ENCODE measurements at regions of chr4 and their contacts with region 1.

Region 1: GRCh38 chr4:108072300-108072699 is 82.6 kb downstream of the HADH start:
- DNase-seq: peak in 7 of 9 donors; percentile 63 to 94 (median 80)
- ATAC-seq: peak; percentile 92
- H3K4me3 ChIP-seq: peak overlapping the region; percentile 0
- H3K4me3 Mint-ChIP-seq: peak overlapping the region; percentile 53 to 81 (median 74)
- H3K27ac ChIP-seq: peak overlapping the region; percentile 77
- H3K27ac Mint-ChIP-seq: peak overlapping the region; percentile 84 to 98 (median 94)
- H3K4me1 ChIP-seq: peaks cover 23 to 62% of the 10 kb centered on the region in 2 donors
- H3K4me1 Mint-ChIP-seq: peaks cover 32 to 95% (median 81%) of the 10 kb centered on the region in 7 donors
- H3K27me3 ChIP-seq: no peaks in the 10 kb centered on the region
- H3K27me3 Mint-ChIP-seq: no peaks in the 10 kb centered on the region

Region 2: GRCh38 chr4:107930821-107931774 is 141.2 kb before region 1 on chr4 and contains the start of gene CYP2U1:
- CTCF ChIA-PET with region 1: no interaction called
- POLR2A ChIA-PET with region 1: no interaction called
- intact Hi-C with region 1: no loop called
- DNase-seq: peak; percentile 74 to 84 (median 81)
- ATAC-seq: peak; percentile 96
- H3K4me3 ChIP-seq: peak within 1 kb of the TSS; percentile 86
- H3K4me3 Mint-ChIP-seq: peak within 1 kb of the TSS; percentile 90 to 98 (median 92)
- H3K27ac ChIP-seq: peak within 1 kb of the TSS; percentile 71
- H3K27ac Mint-ChIP-seq: peak within 1 kb of the TSS; percentile 65 to 98 (median 88)
- H3K4me1 ChIP-seq: peaks cover 8 to 12% of the 10 kb centered on the region in 2 donors
- H3K4me1 Mint-ChIP-seq: peaks cover 21 to 50% (median 35%) of the 10 kb centered on the region in 7 donors
- H3K27me3 ChIP-seq: no peaks in the 10 kb centered on the region
- H3K27me3 Mint-ChIP-seq: peaks cover 0 to 17% (median 0%) of the 10 kb centered on the region in 5 donors
- total RNA-seq, gene CYP2U1: 3.8 to 11.4 (median 5.8) TPM

Region 3: DNA sequence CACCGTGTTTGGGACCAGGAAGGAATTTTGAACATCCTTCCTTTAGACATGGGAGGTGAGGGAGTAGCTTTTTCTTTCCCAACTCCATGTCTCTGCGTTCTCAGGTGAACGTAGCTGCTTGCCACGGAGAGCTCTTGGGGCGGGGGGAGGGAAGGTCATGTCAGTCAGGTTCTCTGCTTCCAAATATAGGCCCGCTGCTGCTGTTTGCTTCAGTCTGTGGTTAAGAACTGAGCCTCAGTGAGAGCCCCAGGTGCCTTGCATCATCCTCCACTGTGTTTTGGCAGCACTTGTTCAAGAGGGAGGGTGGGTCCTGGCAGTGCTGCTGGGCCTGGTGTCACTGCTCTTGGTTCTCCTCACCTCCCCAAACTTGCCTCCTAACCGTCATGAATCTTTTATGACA is 36.1 kb before region 1 on chr4:
- CTCF ChIA-PET with region 1: no interaction called
- POLR2A ChIA-PET with region 1: interaction called, 8 read pairs
- intact Hi-C with region 1: loop called (anchors 1 to 2 kb)
- DNase-seq: peak in 8 of 9 donors; percentile 43 to 93 (median 88)
- ATAC-seq: peak; percentile 99
- H3K4me3 ChIP-seq: peak overlapping the region; percentile 41
- H3K4me3 Mint-ChIP-seq: peak overlapping the region; percentile 73 to 87 (median 80)
- H3K27ac ChIP-seq: peak overlapping the region; percentile 78
- H3K27ac Mint-ChIP-seq: peak overlapping the region; percentile 90 to 100 (median 96)
- H3K4me1 ChIP-seq: peaks cover 0 to 55% of the 10 kb centered on the region in 2 donors
- H3K4me1 Mint-ChIP-seq: peaks cover 19 to 81% (median 66%) of the 10 kb centered on the region in 7 donors
- H3K27me3 ChIP-seq: no peaks in the 10 kb centered on the region
- H3K27me3 Mint-ChIP-seq: no peaks in the 10 kb centered on the region

Region 4: DNA sequence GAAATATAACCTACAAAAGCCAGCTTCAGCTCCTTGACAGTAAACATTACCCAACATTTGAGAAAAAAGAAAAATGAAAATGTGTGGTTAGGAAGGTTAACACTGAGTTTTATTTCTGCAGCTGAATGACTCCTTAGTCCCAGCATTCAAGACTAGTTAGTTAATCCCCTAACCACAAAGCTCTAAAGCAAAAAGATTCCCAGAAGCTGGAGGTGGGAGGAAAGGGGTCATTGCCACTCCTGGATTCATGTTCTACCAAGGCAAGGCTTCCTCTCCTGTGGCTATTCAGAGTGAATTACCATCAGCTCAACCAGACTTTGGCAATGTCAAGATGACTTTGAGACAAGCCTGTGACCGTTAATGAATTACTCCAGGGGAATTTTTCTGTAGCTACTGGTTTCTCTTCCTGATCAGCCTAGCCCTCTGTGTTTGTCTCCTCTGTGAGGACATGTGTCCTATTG is 19.0 kb before region 1 on chr4:
- CTCF ChIA-PET with region 1: no interaction called
- POLR2A ChIA-PET with region 1: interaction called, 55 read pairs
- intact Hi-C with region 1: loop called (anchors 2 kb)
- DNase-seq: no peak
- ATAC-seq: no peak
- H3K4me3 ChIP-seq: no peak overlapping the region
- H3K4me3 Mint-ChIP-seq: peak overlapping the region; percentile 36 to 84 (median 54)
- H3K27ac ChIP-seq: peak overlapping the region; percentile 66
- H3K27ac Mint-ChIP-seq: peak overlapping the region; percentile 82 to 99 (median 93)
- H3K4me1 ChIP-seq: peaks cover 15 to 82% of the 10 kb centered on the region in 2 donors
- H3K4me1 Mint-ChIP-seq: peaks cover 56 to 100% (median 94%) of the 10 kb centered on the region in 7 donors
- H3K27me3 ChIP-seq: no peaks in the 10 kb centered on the region
- H3K27me3 Mint-ChIP-seq: no peaks in the 10 kb centered on the region

Region 5: DNA sequence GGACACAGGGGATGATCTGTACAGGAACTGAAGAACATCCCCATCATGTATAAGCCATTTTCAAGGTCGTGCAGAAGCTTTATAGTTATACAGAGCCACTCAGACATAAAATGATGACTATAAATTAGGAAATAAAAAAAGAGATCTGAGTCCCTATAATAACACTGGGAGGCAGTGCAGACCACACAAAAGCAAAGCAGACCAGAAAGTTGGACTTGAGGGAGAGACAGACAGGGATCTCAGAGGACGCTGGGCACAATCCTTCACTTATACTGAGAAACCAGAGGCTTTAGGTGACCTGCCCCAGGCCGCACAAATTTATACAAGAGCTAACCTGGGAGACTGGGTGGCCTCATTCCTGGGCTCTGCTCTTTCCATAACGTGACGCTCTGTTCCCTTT is 12.1 kb before region 1 on chr4:
- CTCF ChIA-PET with region 1: interaction called, 3 read pairs
- POLR2A ChIA-PET with region 1: interaction called, 55 read pairs
- intact Hi-C with region 1: loop called (anchors 1 to 2 kb)
- DNase-seq: peak in 1 of 9 donors; percentile 17
- ATAC-seq: no peak
- H3K4me3 ChIP-seq: no peak overlapping the region
- H3K4me3 Mint-ChIP-seq: peak overlapping the region in 5 of 10 donors; percentile 13 to 84 (median 64)
- H3K27ac ChIP-seq: peak overlapping the region; percentile 66
- H3K27ac Mint-ChIP-seq: peak overlapping the region in 8 of 9 donors; percentile 78 to 99 (median 90)
- H3K4me1 ChIP-seq: peaks cover 0 to 87% of the 10 kb centered on the region in 2 donors
- H3K4me1 Mint-ChIP-seq: peaks cover 33 to 99% (median 92%) of the 10 kb centered on the region in 7 donors
- H3K27me3 ChIP-seq: no peaks in the 10 kb centered on the region
- H3K27me3 Mint-ChIP-seq: no peaks in the 10 kb centered on the region

Region 6: GRCh38 chr4:108087293-108087967 is 15.1 kb after region 1 on chr4:
- CTCF ChIA-PET with region 1: interaction called, 3 read pairs
- POLR2A ChIA-PET with region 1: interaction called, 6 read pairs
- intact Hi-C with region 1: loop called in 1 of 2 experiments (anchors 2 kb)
- DNase-seq: no peak
- ATAC-seq: no peak
- H3K4me3 ChIP-seq: no peak overlapping the region
- H3K4me3 Mint-ChIP-seq: peak overlapping the region in 8 of 10 donors; percentile 14 to 69 (median 31)
- H3K27ac ChIP-seq: peak overlapping the region; percentile 54
- H3K27ac Mint-ChIP-seq: peak overlapping the region; percentile 10 to 97 (median 87)
- H3K4me1 ChIP-seq: peaks cover 0 to 69% of the 10 kb centered on the region in 2 donors
- H3K4me1 Mint-ChIP-seq: peaks cover 26 to 96% (median 84%) of the 10 kb centered on the region in 7 donors
- H3K27me3 ChIP-seq: no peaks in the 10 kb centered on the region
- H3K27me3 Mint-ChIP-seq: no peaks in the 10 kb centered on the region

Region 7: DNA sequence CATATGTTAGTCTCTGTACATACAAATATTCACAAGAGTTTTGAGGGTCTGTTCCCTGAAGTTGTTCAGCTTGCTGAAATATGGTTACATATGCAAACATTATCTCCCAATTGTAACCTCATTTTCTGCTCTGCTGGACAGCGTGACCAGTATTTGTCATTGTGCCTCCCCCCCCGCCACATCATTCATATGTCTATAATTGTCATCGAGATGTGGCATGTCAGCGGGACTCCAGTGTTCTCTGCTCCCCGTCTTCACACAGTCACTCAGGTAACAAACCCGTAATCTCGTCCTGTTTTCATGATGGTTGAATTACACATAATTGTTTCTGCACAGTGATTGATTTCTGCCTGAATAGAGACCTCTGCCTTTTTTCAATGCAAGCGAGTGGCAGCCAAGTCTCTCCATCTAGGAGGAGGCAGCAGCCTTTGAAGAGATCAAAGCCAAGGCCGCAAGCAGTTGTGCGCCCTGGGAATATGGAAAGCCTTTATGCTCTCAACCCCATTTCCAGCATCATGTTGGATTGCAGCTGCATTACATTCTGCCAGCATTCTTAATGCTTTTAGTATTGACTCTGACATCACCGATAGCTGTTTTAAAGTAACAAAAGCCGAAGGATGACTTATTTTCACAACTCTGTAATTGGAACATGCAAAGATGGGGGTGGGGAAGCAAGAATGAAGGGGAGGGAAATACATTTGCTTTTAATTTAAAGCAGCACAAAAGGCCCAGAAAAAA is 69.1 kb after region 1 on chr4:
- CTCF ChIA-PET with region 1: interaction called, 3 read pairs
- POLR2A ChIA-PET with region 1: interaction called, 4 read pairs
- intact Hi-C with region 1: loop called in 1 of 2 experiments (anchors 2 kb)
- DNase-seq: peak in 1 of 9 donors; percentile 53
- ATAC-seq: no peak
- H3K4me3 ChIP-seq: peak overlapping the region; percentile 38
- H3K4me3 Mint-ChIP-seq: peak overlapping the region; percentile 79 to 91 (median 84)
- H3K27ac ChIP-seq: peak overlapping the region; percentile 81
- H3K27ac Mint-ChIP-seq: peak overlapping the region; percentile 85 to 98 (median 95)
- H3K4me1 ChIP-seq: peaks cover 26 to 97% of the 10 kb centered on the region in 2 donors
- H3K4me1 Mint-ChIP-seq: peaks cover 61 to 99% (median 95%) of the 10 kb centered on the region in 7 donors
- H3K27me3 ChIP-seq: no peaks in the 10 kb centered on the region
- H3K27me3 Mint-ChIP-seq: no peaks in the 10 kb centered on the region

Measured in naive thymus-derived CD4-positive, alpha-beta T cell (primary cell).